Left ventricle myocardium inferior (tissue), 1 donor: ENCODE measurements at regions of chr4 and their contacts with region 1.

Region 1: DNA sequence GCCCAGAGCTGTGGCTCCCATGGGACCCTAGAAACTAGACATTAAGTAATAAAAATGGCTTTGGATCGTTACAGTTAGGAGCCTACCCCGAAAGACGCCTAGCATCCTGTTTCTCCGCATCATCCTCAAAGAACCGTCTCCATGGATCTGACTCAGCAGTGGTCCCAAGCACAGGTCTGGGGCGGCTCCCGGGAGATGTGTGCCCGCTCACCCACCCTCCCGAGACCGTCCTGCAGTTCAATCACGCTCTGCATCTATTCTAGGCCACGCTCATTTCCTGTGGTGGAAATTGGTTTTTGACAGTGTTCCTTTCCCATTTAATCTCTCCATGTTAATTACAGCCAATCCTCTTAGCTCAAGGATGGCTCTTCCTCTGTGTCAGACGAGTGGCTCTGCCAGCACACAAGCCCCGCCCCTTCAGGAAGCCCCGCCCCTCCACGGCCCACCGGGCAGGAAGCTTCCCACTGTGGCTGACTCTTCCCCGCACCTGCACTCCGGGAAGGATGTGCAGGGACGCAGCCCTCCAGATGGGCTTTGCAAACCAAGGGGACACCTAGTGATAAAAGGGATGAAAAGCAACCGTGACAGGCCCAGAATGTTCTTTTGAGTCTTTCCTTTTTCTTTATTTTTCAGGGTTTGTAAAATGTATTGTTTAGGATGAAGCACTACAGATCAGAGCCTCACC is 34.5 kb upstream of the HELT start:
- DNase-seq: peak; percentile 67
- H3K4me3 ChIP-seq: no peak overlapping the region
- H3K27ac ChIP-seq: peak overlapping the region; percentile 10
- H3K4me1 ChIP-seq: peaks cover 22% of the 10 kb centered on the region
- H3K27me3 ChIP-seq: no peaks in the 10 kb centered on the region
- CTCF ChIP-seq: peak; percentile 63

Region 2: GRCh38 chr4:184745831-184746795 is 237.7 kb before region 1 on chr4:
- intact Hi-C with region 1: loop called (anchors 5 kb)
- DNase-seq: peak; percentile 57
- H3K4me3 ChIP-seq: peak overlapping the region; percentile 30
- H3K27ac ChIP-seq: peak overlapping the region; percentile 89
- H3K4me1 ChIP-seq: peaks cover 53% of the 10 kb centered on the region
- H3K27me3 ChIP-seq: no peaks in the 10 kb centered on the region
- CTCF ChIP-seq: peak; percentile 83

Region 3: GRCh38 chr4:185219551-185220344 is 235.9 kb after region 1 on chr4:
- intact Hi-C with region 1: no loop called
- DNase-seq: peak; percentile 40
- H3K4me3 ChIP-seq: no peak overlapping the region
- H3K27ac ChIP-seq: peak overlapping the region; percentile 22
- H3K4me1 ChIP-seq: peaks cover 36% of the 10 kb centered on the region
- H3K27me3 ChIP-seq: no peaks in the 10 kb centered on the region
- CTCF ChIP-seq: no peak